IMR-90 (cell line): ENCODE measurements at regions of chr5 and their contacts with region 1.

Region 1: GRCh38 chr5:1004461-1005248 is 3.9 kb upstream of the NKD2 start:
- DNase-seq: peak; percentile 16
- ATAC-seq: peak; percentile 85
- H3K4me3 ChIP-seq: peak overlapping the region; percentile 29
- H3K27ac ChIP-seq: no peak overlapping the region
- H3K4me1 ChIP-seq: no peaks in the 10 kb centered on the region; the same call in 1 of the 2 replicates
- H3K27me3 ChIP-seq: peaks cover 69% of the 10 kb centered on the region
- CTCF ChIP-seq: peak; percentile 36
- POLR2A ChIP-seq: no peak
- RAD21 ChIP-seq: peak; percentile 11; the same call in 1 of the 2 replicates

Region 2: DNA sequence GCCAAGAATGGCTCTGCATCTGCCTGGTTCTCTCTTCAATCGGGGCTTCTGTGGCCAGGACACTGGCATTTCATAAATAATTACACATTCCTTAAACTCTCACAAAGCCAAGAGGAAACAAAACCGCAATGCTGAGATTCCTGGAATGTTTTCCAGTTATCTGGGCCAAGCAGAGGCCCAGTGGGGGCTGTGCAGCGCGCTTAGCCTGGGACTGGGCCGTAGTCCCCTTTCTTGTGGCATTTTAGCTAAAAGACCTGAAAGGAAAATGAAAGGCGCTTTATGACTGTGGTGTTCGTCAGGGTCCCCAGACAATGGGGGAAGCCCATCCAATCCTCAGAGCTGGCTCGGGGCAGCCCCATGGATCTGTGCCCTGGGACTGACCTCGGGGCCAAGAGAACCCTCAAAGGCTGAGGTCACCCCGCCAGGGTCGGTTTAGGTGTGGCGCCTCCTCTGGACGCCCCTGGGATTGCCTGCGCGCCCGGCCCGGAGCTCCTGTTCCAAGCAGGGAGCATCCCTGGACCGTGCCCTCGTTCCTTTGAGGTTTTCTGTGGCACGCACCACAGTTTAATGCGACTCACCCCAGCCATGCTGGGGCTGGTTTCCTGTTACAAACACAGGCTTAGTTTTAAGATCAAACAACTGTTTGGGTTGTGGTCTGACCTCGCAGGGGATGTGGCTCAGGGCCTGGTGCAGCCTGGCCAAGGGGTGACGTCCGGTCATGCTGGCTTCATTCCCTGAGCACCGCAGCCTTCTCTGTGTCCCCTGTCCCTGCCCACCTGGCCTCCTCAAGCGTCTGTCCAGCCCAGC is 47.5 kb before region 1 on chr5:
- CTCF ChIA-PET with region 1: no interaction called
- POLR2A ChIA-PET with region 1: no interaction called
- dilution Hi-C with region 1: no loop called
- in situ Hi-C with region 1: no loop called
- intact Hi-C with region 1: no loop called
- DNase-seq: peak; percentile 90
- ATAC-seq: peak; percentile 87
- H3K4me3 ChIP-seq: no peak overlapping the region
- H3K27ac ChIP-seq: peak overlapping the region; percentile 91
- H3K4me1 ChIP-seq: peaks cover 29% of the 10 kb centered on the region
- H3K27me3 ChIP-seq: peaks cover 45% of the 10 kb centered on the region
- CTCF ChIP-seq: peak; percentile 45
- POLR2A ChIP-seq: no peak
- RAD21 ChIP-seq: no peak

Region 3: DNA sequence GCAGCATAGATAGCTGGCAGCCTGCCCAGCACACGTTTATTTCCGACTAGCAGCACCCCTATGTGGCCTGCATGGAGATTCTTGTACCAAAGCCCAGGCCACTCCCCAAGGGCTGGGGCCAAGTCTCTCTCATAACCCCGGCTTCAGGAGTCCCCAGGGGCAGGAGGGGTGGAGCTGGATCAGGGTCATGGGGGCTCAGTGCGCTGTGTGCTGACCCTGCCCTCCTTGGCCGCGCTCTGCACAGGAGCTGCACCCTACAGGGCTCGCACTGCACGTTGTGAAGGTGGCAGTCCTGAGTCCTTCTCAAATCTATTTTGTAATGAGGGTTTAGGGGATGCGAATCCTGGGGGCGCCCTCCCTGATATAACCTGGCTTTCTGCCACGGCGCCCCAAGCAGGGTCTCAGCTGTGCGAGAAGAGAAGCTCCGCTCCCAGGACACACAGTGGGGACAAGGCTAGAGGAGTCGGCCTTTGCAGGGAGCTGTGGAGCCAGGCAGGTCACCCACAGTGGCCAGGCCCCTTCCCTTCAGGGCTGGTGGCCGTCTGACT is 32.5 kb after region 1 on chr5:
- CTCF ChIA-PET with region 1: no interaction called
- POLR2A ChIA-PET with region 1: no interaction called
- dilution Hi-C with region 1: no loop called
- in situ Hi-C with region 1: no loop called
- intact Hi-C with region 1: no loop called
- DNase-seq: no peak
- ATAC-seq: no peak
- H3K4me3 ChIP-seq: no peak overlapping the region
- H3K27ac ChIP-seq: no peak overlapping the region
- H3K4me1 ChIP-seq: no peaks in the 10 kb centered on the region
- H3K27me3 ChIP-seq: peaks cover 1% of the 10 kb centered on the region; the same call in 1 of the 2 replicates
- CTCF ChIP-seq: no peak
- POLR2A ChIP-seq: no peak
- RAD21 ChIP-seq: no peak

Region 4: GRCh38 chr5:1111727-1112289 is 107.2 kb after region 1 on chr5 and contains the start of gene SLC12A7:
- CTCF ChIA-PET with region 1: no interaction called
- POLR2A ChIA-PET with region 1: no interaction called
- dilution Hi-C with region 1: no loop called
- in situ Hi-C with region 1: no loop called
- intact Hi-C with region 1: loop called (anchors 10 kb)
- DNase-seq: no peak
- ATAC-seq: peak; percentile 79
- H3K4me3 ChIP-seq: peak within 1 kb of the TSS; percentile 81
- H3K27ac ChIP-seq: peak within 1 kb of the TSS; percentile 2
- H3K4me1 ChIP-seq: peaks cover 4% of the 10 kb centered on the region; the same call in 1 of the 2 replicates
- H3K27me3 ChIP-seq: peaks cover 19% of the 10 kb centered on the region
- CTCF ChIP-seq: no peak
- POLR2A ChIP-seq: peak; percentile 32; the same call in 1 of the 2 replicates
- RAD21 ChIP-seq: no peak
- total RNA-seq, gene SLC12A7: 3.0 and 3.3 TPM in 2 replicates